OCI-LY7 (cell line): ENCODE measurements at regions of chr1 and their contacts with region 1.

Region 1: GRCh38 chr1:171140401-171140800 is 44.7 kb upstream of the FMO2 start:
- DNase-seq: no peak
- H3K4me3 ChIP-seq: no peak overlapping the region
- H3K27ac ChIP-seq: no peak overlapping the region
- H3K4me1 ChIP-seq: no peaks in the 10 kb centered on the region
- CTCF ChIP-seq: no peak

Region 2: DNA sequence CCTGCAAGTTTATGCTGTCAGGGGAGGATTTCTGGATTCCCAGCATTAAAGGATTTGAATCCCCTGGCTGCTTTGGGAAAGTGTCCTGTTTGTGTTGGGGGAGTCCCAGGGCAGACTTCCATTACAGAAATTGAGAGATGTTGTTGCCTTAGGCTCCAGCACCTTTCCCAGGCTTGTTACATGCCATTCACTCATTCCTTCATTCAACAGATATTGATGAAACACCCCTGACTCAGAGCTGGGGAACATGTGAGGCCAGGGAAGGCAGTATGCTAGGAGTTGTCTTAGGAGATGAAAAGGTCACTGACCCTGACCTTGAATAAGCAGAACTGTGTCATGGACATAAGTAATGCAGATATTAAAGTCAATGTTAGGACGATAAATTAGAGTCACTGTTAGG is 833.0 kb before region 1 on chr1:
- CTCF ChIA-PET with region 1: no interaction called
- POLR2A ChIA-PET with region 1: interaction called, 10 read pairs
- intact Hi-C with region 1: no loop called
- DNase-seq: no peak
- H3K4me3 ChIP-seq: no peak overlapping the region
- H3K27ac ChIP-seq: no peak overlapping the region
- H3K4me1 ChIP-seq: no peaks in the 10 kb centered on the region
- CTCF ChIP-seq: no peak